Left cardiac atrium (tissue), 4 donors: ENCODE measurements at regions of chr1 and their contacts with region 1.

Region 1: DNA sequence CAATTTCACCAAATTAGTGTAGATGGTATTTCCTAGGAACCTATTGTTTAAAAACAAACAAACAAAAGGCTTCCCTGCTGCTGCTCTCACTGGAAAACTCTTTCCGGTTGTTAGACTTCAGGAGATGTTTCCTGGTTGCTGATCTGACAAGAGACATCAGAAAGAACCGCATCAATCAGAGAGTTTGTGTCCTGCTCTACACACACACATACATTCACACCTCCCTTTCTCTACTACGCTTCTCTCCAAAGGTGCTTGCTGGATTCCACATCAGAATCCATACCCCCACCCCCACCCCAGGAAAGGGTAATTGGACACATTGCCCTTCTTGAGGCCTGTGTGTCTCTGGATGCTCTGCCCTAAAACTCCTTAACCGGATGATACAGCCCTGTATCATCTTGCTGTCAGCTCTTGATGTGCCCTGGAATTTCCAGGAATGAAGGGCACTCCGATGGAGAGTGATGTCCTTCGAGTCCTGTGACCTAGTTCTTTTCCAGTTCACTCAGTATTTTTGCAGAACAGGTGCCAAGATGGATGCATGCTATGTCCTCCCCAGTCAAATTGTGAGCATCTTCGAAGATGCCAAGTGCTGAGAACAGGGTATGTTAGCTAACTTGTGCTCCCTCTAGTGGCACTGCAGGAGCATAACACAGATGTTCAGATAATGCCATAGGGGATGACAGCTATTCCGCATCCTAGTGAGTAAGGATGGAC is 113.7 kb upstream of the SLC35F3 start:
- DNase-seq: no peak
- ATAC-seq: peak; percentile 86 to 91

Region 2: DNA sequence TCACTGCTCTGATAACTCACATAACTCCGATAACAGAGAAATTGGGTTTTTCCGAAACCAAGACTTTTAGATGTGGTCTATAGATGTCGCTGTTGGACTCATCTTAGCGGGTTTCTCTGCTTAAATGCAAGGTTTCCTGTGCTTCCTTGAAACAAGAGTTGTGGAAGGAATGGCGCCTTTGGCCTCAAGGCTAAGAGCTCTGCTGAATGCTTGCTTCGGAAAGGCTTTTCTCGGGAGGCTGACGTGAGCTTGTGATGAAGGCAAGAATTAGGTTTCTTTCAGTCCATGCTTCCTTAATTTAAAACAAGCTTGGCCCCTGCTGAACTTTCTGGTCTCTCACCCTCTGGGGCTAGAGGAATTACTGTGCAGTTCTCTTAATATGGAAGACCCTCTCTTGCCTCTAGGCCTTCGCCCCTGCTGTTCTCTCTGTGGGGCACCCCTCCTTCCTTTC is 349.8 kb before region 1 on chr1:
- intact Hi-C with region 1: loop called in 1 of 2 experiments (anchors 5 kb)
- DNase-seq: no peak
- ATAC-seq: peak; percentile 50 to 71

Region 3: DNA sequence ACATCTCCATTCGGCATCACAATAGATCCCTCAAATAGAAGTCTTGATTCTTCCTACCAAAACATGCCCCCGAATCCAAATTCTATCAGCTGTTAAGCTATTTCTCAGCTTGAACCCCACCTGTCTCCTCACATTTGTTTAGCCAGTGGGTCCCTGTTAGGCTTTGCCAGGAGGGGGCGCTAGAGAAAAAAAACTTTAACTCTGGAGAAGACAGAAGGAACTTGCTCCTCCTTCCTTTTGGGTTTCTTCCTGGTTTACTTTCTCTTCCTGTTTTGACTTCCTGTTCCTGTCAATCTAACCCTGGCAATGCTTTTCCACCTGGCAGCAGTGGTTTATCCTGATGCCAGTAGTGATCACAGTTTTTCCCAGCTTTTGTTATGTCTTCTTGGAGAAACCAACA is 272.5 kb before region 1 on chr1:
- intact Hi-C with region 1: loop called in 1 of 2 experiments (anchors 5 kb)
- DNase-seq: no peak
- ATAC-seq: no peak

Region 4: GRCh38 chr1:233627376-233627775 is 163.4 kb before region 1 on chr1:
- intact Hi-C with region 1: loop called in 1 of 2 experiments (anchors 10 kb)
- DNase-seq: no peak
- ATAC-seq: peak in 1 of 2 donors; percentile 31